ENCODE measurements at regions of chr3 and their contacts with region 1.

Region 1: GRCh38 chr3:129120254-129121004 is 1.2 kb downstream of the RAB43 start:
- DNase-seq: peak; percentile 98
- H3K4me3 Mint-ChIP-seq: peak overlapping the region; percentile 94
- H3K27ac Mint-ChIP-seq: peak overlapping the region; percentile 99
- H3K4me1 Mint-ChIP-seq: peaks cover 51% of the 10 kb centered on the region
- H3K27me3 Mint-ChIP-seq: no peaks in the 10 kb centered on the region

Region 2: GRCh38 chr3:128804017-128804810 is 316.2 kb before region 1 on chr3:
- intact Hi-C with region 1: loop called (anchors 5 kb)
- DNase-seq: peak; percentile 93
- H3K4me3 Mint-ChIP-seq: peak overlapping the region; percentile 70
- H3K27ac Mint-ChIP-seq: peak overlapping the region; percentile 98
- H3K4me1 Mint-ChIP-seq: peaks cover 78% of the 10 kb centered on the region
- H3K27me3 Mint-ChIP-seq: no peaks in the 10 kb centered on the region

Region 3: GRCh38 chr3:129068291-129068886 is 52.0 kb before region 1 on chr3:
- intact Hi-C with region 1: loop called (anchors 5 kb)
- DNase-seq: peak; percentile 73
- H3K4me3 Mint-ChIP-seq: peak overlapping the region; percentile 65
- H3K27ac Mint-ChIP-seq: no peak overlapping the region
- H3K4me1 Mint-ChIP-seq: peaks cover 8% of the 10 kb centered on the region
- H3K27me3 Mint-ChIP-seq: peaks cover 6% of the 10 kb centered on the region

Region 4: GRCh38 chr3:129238945-129239706 is 118.7 kb after region 1 on chr3:
- intact Hi-C with region 1: loop called (anchors 2 kb)
- DNase-seq: peak; percentile 89
- H3K4me3 Mint-ChIP-seq: peak overlapping the region; percentile 71
- H3K27ac Mint-ChIP-seq: peak overlapping the region; percentile 92
- H3K4me1 Mint-ChIP-seq: peaks cover 38% of the 10 kb centered on the region
- H3K27me3 Mint-ChIP-seq: no peaks in the 10 kb centered on the region

Region 5: GRCh38 chr3:129305592-129306091 is 185.2 kb after region 1 on chr3:
- intact Hi-C with region 1: loop called (anchors 5 kb)
- DNase-seq: peak; percentile 73
- H3K4me3 Mint-ChIP-seq: peak overlapping the region; percentile 52
- H3K27ac Mint-ChIP-seq: peak overlapping the region; percentile 68
- H3K4me1 Mint-ChIP-seq: peaks cover 33% of the 10 kb centered on the region
- H3K27me3 Mint-ChIP-seq: no peaks in the 10 kb centered on the region

Measured in activated CD4-positive, alpha-beta T cell treated with anti-CD3 and anti-CD28 coated beads, Interleukin-2, amount 10 ng/mL, durations not matched to agents 24 days and 14 days (primary cell).